Endothelial cell of umbilical vein (primary cell): ENCODE measurements at regions of chr1 and their contacts with region 1.

Region 1: GRCh38 chr1:29181413-29182225 is at the start of gene SRSF4:
- DNase-seq: peak; percentile 99
- H3K4me3 ChIP-seq: peak within 1 kb of the TSS; percentile 81 to 99 (median 90)
- H3K27ac ChIP-seq: peak within 1 kb of the TSS; percentile 99
- H3K4me1 ChIP-seq: peaks cover 19% of the 10 kb centered on the region
- H3K27me3 ChIP-seq: no peaks in the 10 kb centered on the region
- CTCF ChIP-seq: peak; percentile 68 to 84
- POLR2A ChIP-seq: peak; percentile 87
- total RNA-seq, gene SRSF4: 92.9 and 108 TPM in 2 replicates

Region 2: DNA sequence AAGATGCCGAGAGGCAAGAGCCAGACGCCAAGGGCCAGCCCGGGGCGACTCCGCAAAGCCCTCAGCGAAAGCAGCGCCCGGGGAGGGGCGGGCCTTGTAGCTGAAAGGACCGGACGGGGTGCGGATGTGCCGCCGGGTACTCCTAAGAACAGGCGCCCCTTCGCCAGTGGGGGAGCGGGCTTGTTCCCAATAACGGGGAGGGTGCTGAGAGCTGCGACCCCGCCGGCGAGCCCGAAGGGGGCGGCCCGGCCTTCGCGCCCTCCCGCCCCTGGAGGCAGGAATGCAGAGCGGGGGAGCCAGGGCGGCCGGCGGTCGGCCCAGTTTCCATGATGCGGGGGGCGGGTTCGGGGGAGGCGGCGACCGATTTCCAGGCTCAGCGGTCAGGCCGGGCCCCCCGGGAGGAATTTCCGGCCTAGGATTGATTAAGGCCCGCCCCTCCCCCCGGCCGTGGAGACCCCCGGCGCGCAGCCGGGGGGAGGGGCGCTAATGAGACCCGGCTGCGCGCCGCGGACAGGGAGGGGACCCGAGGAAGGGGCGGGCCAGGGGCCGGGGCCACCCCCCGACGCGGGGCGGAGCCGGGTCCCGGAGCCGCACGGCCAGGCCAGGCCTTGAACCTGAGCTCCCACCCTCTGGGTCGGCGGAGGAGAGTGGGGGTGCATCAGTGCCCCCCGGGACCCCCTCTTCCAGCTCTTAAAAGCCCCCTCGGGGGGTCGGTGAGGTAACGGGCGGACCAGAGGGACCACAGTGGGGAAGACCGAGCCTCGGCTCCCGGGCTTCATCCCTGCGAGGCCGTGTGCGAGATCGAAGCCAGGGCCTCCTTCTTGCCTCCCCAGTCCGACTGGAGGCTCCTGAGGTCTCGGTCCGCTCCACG is 57.0 kb before region 1 on chr1:
- CTCF ChIA-PET with region 1: interaction called, 9 read pairs
- POLR2A ChIA-PET with region 1: interaction called, 9 read pairs
- dilution Hi-C with region 1: no loop called
- intact Hi-C with region 1: loop called (anchors 5 kb)
- DNase-seq: peak; percentile 72
- H3K4me3 ChIP-seq: peak overlapping the region; percentile 33 to 52 (median 42)
- H3K27ac ChIP-seq: peak overlapping the region; percentile 46
- H3K4me1 ChIP-seq: peaks cover 23% of the 10 kb centered on the region
- H3K27me3 ChIP-seq: peaks cover 0 to 14% of the 10 kb centered on the region in 2 experiments
- CTCF ChIP-seq: peak; percentile 55 to 72
- POLR2A ChIP-seq: peak; percentile 26

Region 3: DNA sequence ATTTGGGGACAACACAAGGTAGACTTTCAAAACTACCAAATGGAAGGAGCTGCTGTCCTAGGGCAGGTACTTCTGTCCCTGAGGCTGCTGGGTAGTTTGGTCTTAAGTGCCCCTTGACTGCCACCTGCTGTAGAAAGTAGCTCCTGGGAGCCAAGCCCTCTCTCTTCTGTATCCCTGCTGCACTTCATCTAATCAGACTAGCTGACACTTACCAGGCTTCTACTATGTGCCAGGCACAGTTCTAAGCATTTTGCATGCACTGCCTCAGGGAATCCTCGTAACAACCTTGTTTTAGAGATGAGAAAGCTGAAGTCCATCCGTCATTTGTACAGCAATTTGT is 15.9 kb after region 1 on chr1:
- CTCF ChIA-PET with region 1: interaction called, 55 read pairs
- POLR2A ChIA-PET with region 1: interaction called, 8 read pairs
- dilution Hi-C with region 1: no loop called
- intact Hi-C with region 1: loop called (anchors 1 kb)
- DNase-seq: peak; percentile 39
- H3K4me3 ChIP-seq: no peak overlapping the region
- H3K27ac ChIP-seq: no peak overlapping the region
- H3K4me1 ChIP-seq: peaks cover 8% of the 10 kb centered on the region
- H3K27me3 ChIP-seq: no peaks in the 10 kb centered on the region
- CTCF ChIP-seq: peak; percentile 24 to 51
- POLR2A ChIP-seq: no peak

Region 4: DNA sequence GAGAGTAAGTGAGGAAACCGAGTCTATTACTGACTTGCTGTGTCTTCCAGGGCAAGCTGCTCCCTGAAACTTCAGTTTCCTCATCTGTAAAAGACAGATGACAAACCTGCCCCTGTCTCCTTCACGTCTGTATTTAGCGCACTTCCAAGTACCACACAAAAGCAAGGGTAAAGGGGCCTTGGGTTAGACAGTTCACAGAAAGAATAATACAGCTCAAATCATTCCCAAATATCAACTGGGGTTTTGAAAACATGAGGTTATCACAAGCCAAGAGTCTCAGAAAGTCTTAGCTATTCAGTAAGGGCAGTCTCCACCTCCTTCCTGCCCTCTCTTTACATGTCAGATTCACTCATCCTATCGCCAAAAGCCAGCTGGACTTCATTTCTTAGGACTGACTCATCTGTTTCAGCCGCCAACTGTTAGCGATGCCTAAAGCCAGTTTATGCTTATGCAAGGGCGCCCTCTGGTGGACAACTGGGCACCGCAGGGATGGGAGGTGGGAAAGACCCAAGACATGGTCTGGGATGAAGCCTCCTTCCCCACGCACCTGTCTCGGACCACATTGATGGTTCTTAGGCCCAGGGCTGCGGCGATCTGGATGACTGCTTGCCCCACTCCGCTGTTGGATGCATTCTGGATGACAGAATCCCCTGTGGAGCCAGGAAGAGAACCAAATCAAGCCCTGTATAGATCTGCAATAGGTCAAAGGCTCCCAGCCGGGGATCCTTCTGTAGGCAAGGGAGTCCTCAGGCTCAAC is 21.1 kb after region 1 on chr1:
- CTCF ChIA-PET with region 1: interaction called, 55 read pairs
- POLR2A ChIA-PET with region 1: interaction called, 8 read pairs
- dilution Hi-C with region 1: no loop called
- intact Hi-C with region 1: loop called (anchors 1 kb)
- DNase-seq: peak; percentile 96
- H3K4me3 ChIP-seq: no peak overlapping the region
- H3K27ac ChIP-seq: peak overlapping the region; percentile 63
- H3K4me1 ChIP-seq: peaks cover 10% of the 10 kb centered on the region
- H3K27me3 ChIP-seq: no peaks in the 10 kb centered on the region
- CTCF ChIP-seq: peak; percentile 89 to 97
- POLR2A ChIP-seq: no peak

Region 5: DNA sequence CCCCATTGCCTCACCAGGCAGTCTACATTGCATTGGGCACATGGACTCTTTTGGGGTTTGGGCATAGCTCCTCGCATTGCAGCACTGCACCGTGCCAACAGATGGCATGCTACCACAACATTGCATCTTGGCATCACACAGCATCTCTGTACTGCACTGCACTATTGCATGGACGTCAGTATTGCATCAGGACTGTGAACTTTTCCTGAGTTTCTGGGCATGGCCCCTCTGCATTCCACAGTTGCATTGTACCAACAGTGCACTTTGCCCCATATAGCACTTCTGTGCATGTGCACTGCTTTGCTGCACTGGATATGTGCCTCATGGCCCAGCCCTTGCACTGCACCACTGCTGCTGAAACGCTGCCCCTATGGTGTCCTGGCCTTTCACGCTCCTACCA is 64.3 kb after region 1 on chr1:
- CTCF ChIA-PET with region 1: no interaction called
- POLR2A ChIA-PET with region 1: no interaction called
- dilution Hi-C with region 1: no loop called
- intact Hi-C with region 1: no loop called
- DNase-seq: peak; percentile 11
- H3K4me3 ChIP-seq: no peak overlapping the region
- H3K27ac ChIP-seq: no peak overlapping the region
- H3K4me1 ChIP-seq: no peaks in the 10 kb centered on the region
- H3K27me3 ChIP-seq: peaks cover 0 to 1% of the 10 kb centered on the region in 2 experiments
- CTCF ChIP-seq: peak; percentile 21 to 48
- POLR2A ChIP-seq: no peak